Activated CD4-positive, alpha-beta memory T cell treated with anti-CD3 and anti-CD28 coated beads for 36 hours (primary cell): ENCODE measurements at regions of chr2 and their contacts with region 1.

Region 1: GRCh38 chr2:38581193-38582147 is 21.3 kb downstream of the HNRNPLL start:
- DNase-seq: peak; percentile 43
- H3K4me3 Mint-ChIP-seq: no peak overlapping the region
- H3K27ac Mint-ChIP-seq: peak overlapping the region; percentile 52
- H3K4me1 Mint-ChIP-seq: peaks cover 60% of the 10 kb centered on the region
- H3K27me3 Mint-ChIP-seq: no peaks in the 10 kb centered on the region

Region 2: GRCh38 chr2:38284971-38285370 is 296.5 kb before region 1 on chr2:
- CTCF ChIA-PET with region 1: no interaction called
- POLR2A ChIA-PET with region 1: no interaction called
- intact Hi-C with region 1: no loop called
- DNase-seq: no peak
- H3K4me3 Mint-ChIP-seq: no peak overlapping the region
- H3K27ac Mint-ChIP-seq: no peak overlapping the region
- H3K4me1 Mint-ChIP-seq: no peaks in the 10 kb centered on the region
- H3K27me3 Mint-ChIP-seq: peaks cover 15% of the 10 kb centered on the region

Region 3: DNA sequence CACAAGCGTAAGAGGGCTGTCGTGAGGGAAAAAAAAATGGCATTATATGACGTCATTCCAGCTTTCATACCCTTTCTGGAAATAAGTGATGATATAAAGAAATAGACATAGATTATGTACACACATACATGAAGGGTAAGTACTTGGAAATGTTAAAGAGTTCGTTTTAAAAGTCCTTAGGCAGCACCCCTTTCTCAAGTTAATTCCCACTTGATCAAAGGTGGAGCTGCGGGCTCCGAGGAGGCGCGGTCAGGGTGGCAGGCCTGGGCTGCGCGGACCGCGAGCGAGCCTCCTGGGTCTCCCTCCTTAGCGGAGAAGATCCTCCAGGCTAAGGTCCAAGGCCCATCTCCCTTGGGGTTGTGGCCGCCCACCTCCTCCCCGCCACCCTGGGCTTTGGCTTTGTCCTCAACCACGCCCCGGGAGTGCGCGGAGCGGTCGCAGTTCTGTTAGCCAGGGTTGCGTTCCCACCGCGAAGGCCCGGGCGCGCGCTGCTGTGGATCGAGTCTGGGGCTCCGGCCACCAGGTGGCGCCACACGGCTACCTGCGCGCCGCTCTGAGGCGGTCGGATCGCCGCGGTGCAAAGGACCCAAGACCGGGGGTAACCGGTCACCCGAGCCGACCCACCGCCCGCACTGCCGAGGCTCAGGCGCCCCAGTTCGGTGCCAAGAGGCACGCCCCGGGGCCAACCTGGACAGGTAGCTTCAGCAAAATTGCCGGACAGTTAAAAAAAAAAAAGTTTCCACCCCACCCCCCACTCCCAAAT is 45.5 kb before region 1 on chr2:
- CTCF ChIA-PET with region 1: interaction called, 14 read pairs
- POLR2A ChIA-PET with region 1: no interaction called
- intact Hi-C with region 1: no loop called
- DNase-seq: peak; percentile 85
- H3K4me3 Mint-ChIP-seq: peak overlapping the region; percentile 59
- H3K27ac Mint-ChIP-seq: no peak overlapping the region
- H3K4me1 Mint-ChIP-seq: peaks cover 6% of the 10 kb centered on the region
- H3K27me3 Mint-ChIP-seq: no peaks in the 10 kb centered on the region

Region 4: GRCh38 chr2:38560092-38560491 is 21.4 kb before region 1 on chr2:
- CTCF ChIA-PET with region 1: interaction called, 12 read pairs
- POLR2A ChIA-PET with region 1: no interaction called
- intact Hi-C with region 1: no loop called
- DNase-seq: no peak
- H3K4me3 Mint-ChIP-seq: no peak overlapping the region
- H3K27ac Mint-ChIP-seq: peak overlapping the region; percentile 42
- H3K4me1 Mint-ChIP-seq: no peaks in the 10 kb centered on the region
- H3K27me3 Mint-ChIP-seq: no peaks in the 10 kb centered on the region

Region 5: GRCh38 chr2:38653715-38654527 is 72.5 kb after region 1 on chr2:
- CTCF ChIA-PET with region 1: interaction called, 16 read pairs
- POLR2A ChIA-PET with region 1: interaction called, 9 read pairs
- intact Hi-C with region 1: no loop called
- DNase-seq: peak; percentile 89
- H3K4me3 Mint-ChIP-seq: peak overlapping the region; percentile 63
- H3K27ac Mint-ChIP-seq: peak overlapping the region; percentile 91
- H3K4me1 Mint-ChIP-seq: peaks cover 68% of the 10 kb centered on the region
- H3K27me3 Mint-ChIP-seq: no peaks in the 10 kb centered on the region

Region 6: DNA sequence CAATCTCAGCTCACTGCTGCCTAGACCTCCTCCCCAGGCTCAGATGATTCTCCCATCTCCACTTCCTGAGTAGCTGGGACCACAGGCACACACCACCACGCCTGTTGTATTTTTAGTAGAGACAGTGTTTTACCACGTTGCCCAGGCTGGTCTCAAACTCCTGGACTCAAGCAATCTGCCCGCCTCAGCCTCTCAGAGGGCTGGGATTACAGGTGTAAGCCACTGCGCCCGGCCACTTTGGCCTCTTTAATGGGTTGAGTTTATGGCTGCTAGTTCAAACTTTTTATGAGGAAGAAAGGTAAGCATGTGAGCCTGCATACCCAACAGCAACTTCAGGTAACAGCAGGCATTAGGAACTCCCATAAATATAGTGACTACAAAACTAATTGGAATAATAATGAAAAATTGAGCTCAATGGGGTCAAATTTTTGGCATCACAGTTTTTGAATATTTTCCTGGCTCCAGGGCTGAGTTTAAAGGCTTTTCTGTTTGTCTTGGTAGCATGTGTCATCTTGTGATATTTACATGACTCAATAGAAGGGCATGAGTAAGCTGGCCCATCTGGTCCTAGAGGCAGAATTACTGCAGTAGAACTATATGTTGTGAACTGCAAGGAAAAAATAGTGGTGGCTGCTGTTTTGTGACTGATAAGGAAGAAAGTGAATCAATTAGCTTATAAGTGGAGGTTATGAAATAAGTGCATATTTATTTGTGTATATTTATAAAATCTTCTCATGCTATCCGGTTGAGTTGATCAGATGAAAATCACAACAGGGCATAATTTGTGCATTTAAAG is 109.2 kb after region 1 on chr2:
- CTCF ChIA-PET with region 1: interaction called, 21 read pairs
- POLR2A ChIA-PET with region 1: no interaction called
- intact Hi-C with region 1: no loop called
- DNase-seq: peak; percentile 50
- H3K4me3 Mint-ChIP-seq: no peak overlapping the region
- H3K27ac Mint-ChIP-seq: peak overlapping the region; percentile 88
- H3K4me1 Mint-ChIP-seq: peaks cover 78% of the 10 kb centered on the region
- H3K27me3 Mint-ChIP-seq: no peaks in the 10 kb centered on the region

Region 7: GRCh38 chr2:38734299-38735058 is 153.0 kb after region 1 on chr2:
- CTCF ChIA-PET with region 1: interaction called, 135 read pairs
- POLR2A ChIA-PET with region 1: no interaction called
- intact Hi-C with region 1: no loop called
- DNase-seq: peak; percentile 6
- H3K4me3 Mint-ChIP-seq: no peak overlapping the region
- H3K27ac Mint-ChIP-seq: no peak overlapping the region
- H3K4me1 Mint-ChIP-seq: peaks cover 19% of the 10 kb centered on the region
- H3K27me3 Mint-ChIP-seq: no peaks in the 10 kb centered on the region

Region 8: DNA sequence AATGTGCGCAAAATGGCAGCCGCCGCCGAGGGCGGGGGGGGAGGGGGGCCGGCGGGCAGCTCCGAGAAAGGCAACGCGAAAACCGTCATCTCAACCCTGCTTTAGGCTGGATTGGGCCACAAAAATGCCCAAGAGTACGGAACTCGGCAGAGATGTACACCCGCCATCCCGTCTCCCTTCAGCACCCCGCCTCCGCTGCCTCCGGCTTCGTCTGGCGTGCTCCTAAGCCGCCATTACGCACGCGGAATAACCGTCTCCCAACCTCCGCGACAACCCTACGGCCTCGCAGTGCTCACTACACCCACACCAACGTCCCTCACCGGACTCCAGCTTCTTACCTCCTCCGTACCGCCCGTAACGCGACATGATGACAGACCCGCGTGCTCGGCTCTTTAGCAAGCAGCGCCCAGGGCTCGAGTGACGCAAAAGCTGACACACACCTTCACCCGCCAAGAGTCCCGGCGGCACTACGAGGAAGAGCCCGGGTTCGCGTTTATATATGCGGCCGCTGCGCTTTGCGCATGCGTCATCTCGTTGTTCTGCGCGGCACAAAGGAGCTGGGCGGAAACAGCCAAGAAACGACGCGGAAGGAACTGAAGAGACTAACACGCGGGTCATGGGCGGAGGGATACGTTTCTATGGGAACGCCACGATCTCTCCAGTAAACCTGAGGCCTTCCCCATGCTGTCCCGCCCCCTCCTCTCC is 169.6 kb after region 1 on chr2 and contains the start of gene SRSF7:
- CTCF ChIA-PET with region 1: interaction called, 5 read pairs
- POLR2A ChIA-PET with region 1: interaction called, 38 read pairs
- intact Hi-C with region 1: no loop called
- DNase-seq: peak; percentile 98
- H3K4me3 Mint-ChIP-seq: peak within 1 kb of the TSS; percentile 95
- H3K27ac Mint-ChIP-seq: peak within 1 kb of the TSS; percentile 100
- H3K4me1 Mint-ChIP-seq: peaks cover 53% of the 10 kb centered on the region
- H3K27me3 Mint-ChIP-seq: peaks cover 6% of the 10 kb centered on the region
- total RNA-seq, gene SRSF7: 276 to 279 TPM